ENCODE measurements at regions of chr5 and their contacts with region 1.

Region 1: GRCh38 chr5:14821100-14821845 is 50.3 kb downstream of the ANKH start:
- DNase-seq: no peak
- ATAC-seq: no peak

Region 2: GRCh38 chr5:14775857-14776256 is 45.4 kb before region 1 on chr5:
- intact Hi-C with region 1: no loop called
- DNase-seq: peak; percentile 48
- ATAC-seq: peak in 1 of 2 donors; percentile 74

Region 3: GRCh38 chr5:14861123-14861765 is 40.0 kb after region 1 on chr5:
- intact Hi-C with region 1: loop called in 1 of 2 experiments (anchors 5 kb)
- DNase-seq: no peak
- ATAC-seq: peak; percentile 76 to 83